ENCODE measurements at regions of chr3 and their contacts with region 1.

Region 1: DNA sequence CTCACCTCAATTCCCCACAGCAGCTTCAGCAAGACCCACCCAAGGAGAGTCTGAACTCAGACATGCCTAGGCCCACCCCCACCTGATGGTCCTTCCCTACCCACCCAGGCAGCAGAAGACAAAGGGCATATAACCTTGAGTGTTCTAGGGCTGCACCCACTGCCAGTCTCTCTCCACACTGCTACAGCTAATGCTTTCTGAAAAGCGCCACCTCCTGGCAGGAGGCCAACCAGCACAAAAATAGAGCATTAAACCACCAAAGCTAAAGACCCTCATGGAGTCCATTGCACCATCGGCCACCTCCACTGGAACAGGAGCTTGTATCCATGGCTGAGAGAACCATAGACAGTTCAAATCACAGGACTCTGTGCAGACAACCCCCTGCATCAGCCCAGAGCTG is 11.3 kb upstream of the RPL39L start:
- DNase-seq: peak; percentile 81
- H3K4me3 Mint-ChIP-seq: no peak overlapping the region
- H3K27ac Mint-ChIP-seq: no peak overlapping the region
- H3K4me1 Mint-ChIP-seq: no peaks in the 10 kb centered on the region
- H3K27me3 Mint-ChIP-seq: no peaks in the 10 kb centered on the region

Region 2: DNA sequence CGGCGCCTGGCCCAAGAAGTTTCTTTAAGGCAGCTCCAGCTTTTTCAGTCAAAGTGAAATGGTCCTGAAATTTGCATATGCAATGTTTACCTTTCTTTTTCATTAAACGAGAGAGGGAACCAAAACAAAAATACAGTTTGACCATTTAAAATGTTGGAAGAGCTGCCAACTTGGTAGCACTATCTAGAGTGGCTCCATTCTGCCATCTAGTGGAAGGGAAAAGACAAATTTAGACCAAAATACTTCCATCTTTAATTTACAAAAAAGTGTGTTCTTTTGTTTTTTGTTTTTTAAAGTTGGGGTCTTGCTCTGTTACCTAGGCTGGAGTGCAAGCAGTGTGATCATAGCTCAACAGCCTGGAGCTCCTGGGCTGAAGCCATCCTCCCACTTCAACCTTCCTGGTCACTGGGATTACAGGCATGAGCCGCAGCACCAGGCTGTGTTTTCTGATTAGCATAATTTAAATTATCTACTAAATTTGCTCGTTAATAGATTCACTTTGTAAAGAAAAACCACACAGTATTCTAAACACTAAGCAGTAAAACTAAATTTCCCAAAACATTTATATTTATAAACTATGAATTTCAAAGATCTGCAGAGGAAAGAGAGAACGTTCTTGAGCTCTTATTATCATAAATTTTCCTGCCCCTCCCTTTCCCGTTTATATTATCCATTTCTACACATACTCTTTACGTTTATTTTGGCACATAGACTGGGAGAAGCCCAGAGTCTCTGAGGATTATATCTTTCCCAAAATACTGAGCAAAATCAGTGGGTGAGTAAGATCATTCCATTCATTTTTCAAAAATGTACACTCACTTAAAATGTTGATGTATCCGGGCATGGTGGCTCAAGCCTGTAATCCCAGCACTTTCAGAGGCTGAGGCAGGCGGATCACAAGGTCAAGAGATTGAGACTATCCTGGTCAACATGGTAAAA is 328.9 kb before region 1 on chr3:
- CTCF ChIA-PET with region 1: no interaction called
- intact Hi-C with region 1: no loop called
- DNase-seq: peak; percentile 12
- H3K4me3 Mint-ChIP-seq: no peak overlapping the region
- H3K27ac Mint-ChIP-seq: no peak overlapping the region
- H3K4me1 Mint-ChIP-seq: peaks cover 25% of the 10 kb centered on the region
- H3K27me3 Mint-ChIP-seq: peaks cover 12% of the 10 kb centered on the region

Region 3: GRCh38 chr3:187101184-187102072 is 49.2 kb before region 1 on chr3:
- CTCF ChIA-PET with region 1: interaction called, 16 read pairs
- intact Hi-C with region 1: no loop called
- DNase-seq: peak; percentile 67
- H3K4me3 Mint-ChIP-seq: peak overlapping the region; percentile 19
- H3K27ac Mint-ChIP-seq: no peak overlapping the region
- H3K4me1 Mint-ChIP-seq: peaks cover 25% of the 10 kb centered on the region
- H3K27me3 Mint-ChIP-seq: no peaks in the 10 kb centered on the region

Region 4: DNA sequence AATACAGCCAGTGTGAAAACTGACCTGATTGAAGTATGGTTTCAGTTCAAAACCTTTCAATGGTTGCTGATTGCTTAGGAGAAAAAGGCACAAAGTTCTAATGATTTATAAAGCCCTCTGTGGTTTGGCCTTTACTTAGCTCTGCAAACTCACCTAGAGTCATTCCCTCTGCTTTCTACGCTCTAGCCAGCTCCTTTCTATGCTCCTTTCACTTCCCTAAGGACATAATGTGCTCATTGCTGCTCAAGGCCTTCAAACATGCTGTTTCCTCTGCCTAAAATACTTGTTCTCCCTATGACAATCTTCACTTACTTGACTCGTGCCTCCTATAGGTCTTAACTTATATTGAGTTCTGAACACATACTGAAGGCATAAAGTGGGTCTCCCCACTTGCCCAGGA is 30.3 kb before region 1 on chr3:
- CTCF ChIA-PET with region 1: interaction called, 105 read pairs
- intact Hi-C with region 1: no loop called
- DNase-seq: no peak
- H3K4me3 Mint-ChIP-seq: no peak overlapping the region
- H3K27ac Mint-ChIP-seq: no peak overlapping the region
- H3K4me1 Mint-ChIP-seq: no peaks in the 10 kb centered on the region
- H3K27me3 Mint-ChIP-seq: no peaks in the 10 kb centered on the region

Region 5: GRCh38 chr3:187139126-187139894 is 11.3 kb before region 1 on chr3 and contains the start of gene RPL39L:
- CTCF ChIA-PET with region 1: interaction called, 56 read pairs
- intact Hi-C with region 1: no loop called
- DNase-seq: peak; percentile 95
- H3K4me3 Mint-ChIP-seq: peak within 1 kb of the TSS; percentile 91
- H3K27ac Mint-ChIP-seq: peak within 1 kb of the TSS; percentile 95
- H3K4me1 Mint-ChIP-seq: peaks cover 21% of the 10 kb centered on the region
- H3K27me3 Mint-ChIP-seq: no peaks in the 10 kb centered on the region
- total RNA-seq, gene RPL39L: 19.2 to 20.9 TPM